Colonic mucosa (tissue), 4 donors: ENCODE measurements at regions of chr12 and their contacts with region 1.

Region 1: DNA sequence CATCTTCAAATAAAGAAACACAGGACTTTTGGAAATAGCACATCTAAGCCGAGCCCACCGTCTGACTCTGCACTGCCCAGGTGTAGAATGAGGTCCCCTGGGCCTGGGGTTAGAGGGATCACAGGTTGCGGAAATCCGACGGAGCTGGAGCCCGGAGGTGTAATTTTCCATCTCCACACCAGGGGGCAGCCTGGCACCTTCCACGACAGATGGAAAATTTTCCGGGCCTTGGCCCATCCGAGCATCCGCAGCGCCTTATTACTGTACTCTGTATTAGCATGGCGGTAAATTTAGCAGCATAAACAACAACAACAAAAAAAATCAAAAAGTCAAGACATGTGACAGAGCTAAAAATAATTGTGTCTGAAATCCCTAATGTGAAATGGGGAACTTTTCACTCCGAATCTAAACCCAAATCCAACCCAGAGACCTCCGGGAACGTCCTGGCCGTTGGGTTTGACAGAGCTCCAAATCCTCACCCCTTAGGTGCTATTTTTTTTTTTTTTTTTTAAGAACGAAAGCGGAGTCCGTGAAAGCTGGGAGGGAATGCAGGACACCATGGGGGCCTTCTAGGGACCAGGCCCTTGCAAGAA is 93.9 kb downstream of the KSR2 start:
- DNase-seq: peak; percentile 74
- H3K4me3 ChIP-seq: no peak overlapping the region
- H3K27ac ChIP-seq: no peak overlapping the region
- H3K4me1 ChIP-seq: no peaks in the 10 kb centered on the region
- H3K27me3 ChIP-seq: no peaks in the 10 kb centered on the region
- CTCF ChIP-seq: peak; percentile 96

Region 2: GRCh38 chr12:117671734-117672133 is 203.2 kb before region 1 on chr12:
- intact Hi-C with region 1: no loop called
- DNase-seq: no peak
- H3K4me3 ChIP-seq: no peak overlapping the region
- H3K27ac ChIP-seq: no peak overlapping the region
- H3K4me1 ChIP-seq: no peaks in the 10 kb centered on the region
- H3K27me3 ChIP-seq: no peaks in the 10 kb centered on the region
- CTCF ChIP-seq: peak; percentile 24

Region 3: DNA sequence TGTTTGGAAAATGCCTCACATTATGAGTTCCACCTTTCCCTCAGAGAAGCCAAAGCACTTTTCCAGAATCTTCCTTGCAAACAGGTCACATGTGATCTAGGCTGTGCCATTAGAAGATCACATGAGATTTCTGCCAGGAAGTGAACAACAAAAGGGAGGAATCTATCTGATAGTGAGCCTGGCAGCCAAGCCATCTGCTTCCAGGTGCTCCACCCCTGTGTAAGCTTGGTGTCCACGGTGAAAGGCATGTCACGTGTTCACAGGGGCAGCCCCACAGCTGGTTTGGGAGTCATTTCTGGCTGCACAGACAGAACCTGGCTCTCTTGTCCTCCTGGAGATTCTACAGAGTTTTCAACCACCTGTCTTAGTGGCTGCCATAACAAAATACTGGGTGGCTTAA is 97.4 kb after region 1 on chr12:
- intact Hi-C with region 1: no loop called
- DNase-seq: peak; percentile 27
- H3K4me3 ChIP-seq: no peak overlapping the region
- H3K27ac ChIP-seq: peak overlapping the region; percentile 25
- H3K4me1 ChIP-seq: no peaks in the 10 kb centered on the region
- H3K27me3 ChIP-seq: no peaks in the 10 kb centered on the region
- CTCF ChIP-seq: no peak

Region 4: GRCh38 chr12:118025168-118025567 is 150.2 kb after region 1 on chr12:
- intact Hi-C with region 1: loop called (anchors 5 kb)
- DNase-seq: no peak
- H3K4me3 ChIP-seq: no peak overlapping the region
- H3K27ac ChIP-seq: no peak overlapping the region
- H3K4me1 ChIP-seq: no peaks in the 10 kb centered on the region
- H3K27me3 ChIP-seq: no peaks in the 10 kb centered on the region
- CTCF ChIP-seq: no peak